ENCODE measurements at regions of chr18 and their contacts with region 1.

Region 1: DNA sequence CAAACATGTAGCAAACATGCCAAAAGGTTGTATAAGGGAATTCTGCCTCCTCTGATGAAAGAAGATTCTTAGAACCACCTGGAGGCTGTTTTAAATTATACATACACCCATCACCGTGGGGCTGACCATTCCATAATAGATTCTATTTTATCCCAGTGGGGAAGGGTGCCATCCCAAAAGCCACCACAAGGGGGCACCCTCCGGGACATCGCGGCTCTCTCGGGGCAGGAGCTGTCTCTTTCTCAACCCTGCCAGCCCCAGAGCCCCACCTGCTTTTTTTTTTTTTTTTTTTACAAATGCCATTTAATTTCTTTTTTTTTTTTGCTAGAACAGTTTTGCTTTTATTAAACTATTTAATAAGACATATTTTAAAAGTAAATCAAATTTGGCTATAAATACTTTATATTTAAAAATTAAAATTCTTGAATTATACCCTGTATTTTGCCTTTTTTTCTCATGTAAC is 8.6 kb upstream of the MTCL1 start:
- DNase-seq: peak; percentile 82
- H3K4me3 Mint-ChIP-seq: no peak overlapping the region
- H3K27ac Mint-ChIP-seq: no peak overlapping the region
- H3K4me1 Mint-ChIP-seq: no peaks in the 10 kb centered on the region
- H3K27me3 Mint-ChIP-seq: peaks cover 9% of the 10 kb centered on the region

Region 2: DNA sequence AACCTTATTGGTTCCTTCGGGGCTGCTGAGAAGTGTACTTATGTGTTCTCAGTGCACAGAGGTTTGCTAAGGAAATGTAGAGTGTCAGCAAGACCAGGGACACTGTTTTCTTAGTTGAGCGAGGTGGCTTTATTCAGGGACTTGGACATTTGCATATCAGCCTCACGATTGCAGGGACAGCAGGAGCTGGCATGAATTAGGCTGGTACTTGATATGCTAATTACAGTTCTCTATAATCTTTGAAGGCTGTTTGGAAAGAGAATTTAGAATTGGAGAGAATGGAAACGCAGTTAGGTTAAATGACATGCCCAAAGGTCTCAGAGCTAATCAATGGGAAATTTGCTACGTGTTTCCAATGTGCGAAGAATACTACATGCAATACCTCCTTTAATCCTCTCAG is 10.2 kb before region 1 on chr18:
- CTCF ChIA-PET with region 1: interaction called, 19 read pairs
- POLR2A ChIA-PET with region 1: no interaction called
- intact Hi-C with region 1: no loop called
- DNase-seq: no peak
- H3K4me3 Mint-ChIP-seq: no peak overlapping the region
- H3K27ac Mint-ChIP-seq: no peak overlapping the region
- H3K4me1 Mint-ChIP-seq: no peaks in the 10 kb centered on the region
- H3K27me3 Mint-ChIP-seq: peaks cover 6% of the 10 kb centered on the region

Region 3: DNA sequence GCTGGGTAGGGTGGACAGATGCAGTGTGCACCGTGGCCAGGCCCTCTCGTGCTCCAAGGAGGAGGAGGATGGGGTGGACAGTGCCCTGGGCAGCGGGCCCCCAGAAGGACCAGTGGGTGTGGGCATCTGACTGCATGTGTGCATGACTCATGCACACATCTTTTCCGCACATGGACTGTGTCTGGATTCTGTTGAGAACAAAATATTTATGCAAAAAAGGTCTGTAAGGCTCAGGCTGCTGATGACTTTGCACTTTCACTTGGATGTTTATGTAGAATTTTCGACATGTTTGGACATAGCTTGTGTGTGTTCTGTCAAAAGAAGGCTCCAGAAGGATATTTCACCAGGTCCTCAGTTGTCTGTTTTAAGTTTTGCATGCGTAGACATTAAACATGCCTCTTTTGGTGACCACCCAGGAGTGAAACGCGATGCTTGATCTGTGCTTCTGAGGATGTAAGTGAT is 54.2 kb after region 1 on chr18:
- CTCF ChIA-PET with region 1: no interaction called
- POLR2A ChIA-PET with region 1: no interaction called
- intact Hi-C with region 1: no loop called
- DNase-seq: no peak
- H3K4me3 Mint-ChIP-seq: no peak overlapping the region
- H3K27ac Mint-ChIP-seq: no peak overlapping the region
- H3K4me1 Mint-ChIP-seq: peaks cover 16% of the 10 kb centered on the region
- H3K27me3 Mint-ChIP-seq: no peaks in the 10 kb centered on the region

Region 4: GRCh38 chr18:8830067-8831060 is 133.6 kb after region 1 on chr18:
- CTCF ChIA-PET with region 1: no interaction called
- POLR2A ChIA-PET with region 1: no interaction called
- intact Hi-C with region 1: no loop called
- DNase-seq: no peak
- H3K4me3 Mint-ChIP-seq: no peak overlapping the region
- H3K27ac Mint-ChIP-seq: no peak overlapping the region
- H3K4me1 Mint-ChIP-seq: no peaks in the 10 kb centered on the region
- H3K27me3 Mint-ChIP-seq: no peaks in the 10 kb centered on the region

Region 5: GRCh38 chr18:8982416-8983184 is 285.8 kb after region 1 on chr18:
- CTCF ChIA-PET with region 1: interaction called, 65 read pairs
- POLR2A ChIA-PET with region 1: no interaction called
- intact Hi-C with region 1: no loop called
- DNase-seq: peak; percentile 24
- H3K4me3 Mint-ChIP-seq: no peak overlapping the region
- H3K27ac Mint-ChIP-seq: no peak overlapping the region
- H3K4me1 Mint-ChIP-seq: no peaks in the 10 kb centered on the region
- H3K27me3 Mint-ChIP-seq: no peaks in the 10 kb centered on the region

Region 6: GRCh38 chr18:8988261-8988871 is 291.6 kb after region 1 on chr18:
- CTCF ChIA-PET with region 1: interaction called, 65 read pairs
- POLR2A ChIA-PET with region 1: no interaction called
- intact Hi-C with region 1: loop called (anchors 1 kb)
- DNase-seq: peak; percentile 68
- H3K4me3 Mint-ChIP-seq: no peak overlapping the region
- H3K27ac Mint-ChIP-seq: no peak overlapping the region
- H3K4me1 Mint-ChIP-seq: no peaks in the 10 kb centered on the region
- H3K27me3 Mint-ChIP-seq: peaks cover 14% of the 10 kb centered on the region

Region 7: DNA sequence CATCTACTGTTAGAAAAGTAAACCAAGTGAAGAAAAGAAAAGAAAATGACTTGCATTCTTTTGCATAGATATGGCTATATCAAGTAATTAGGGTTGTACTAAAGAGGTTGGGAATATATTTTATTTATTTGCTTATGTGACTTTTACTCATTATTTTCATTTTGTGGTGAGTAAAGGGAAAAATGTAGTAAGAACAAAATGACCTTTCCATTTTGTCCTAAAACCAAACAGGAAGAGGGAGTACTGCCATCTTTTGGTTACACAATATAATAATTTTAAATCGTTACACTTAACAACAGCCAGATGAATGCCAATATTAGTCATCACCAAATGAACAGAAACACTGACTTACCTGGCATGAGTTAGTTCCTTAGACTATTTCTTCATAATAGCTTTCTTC is 358.4 kb after region 1 on chr18:
- CTCF ChIA-PET with region 1: no interaction called
- POLR2A ChIA-PET with region 1: no interaction called
- intact Hi-C with region 1: loop called (anchors 5 kb)
- DNase-seq: no peak
- H3K4me3 Mint-ChIP-seq: no peak overlapping the region
- H3K27ac Mint-ChIP-seq: no peak overlapping the region
- H3K4me1 Mint-ChIP-seq: peaks cover 8% of the 10 kb centered on the region
- H3K27me3 Mint-ChIP-seq: no peaks in the 10 kb centered on the region

Measured in activated CD4-positive, alpha-beta memory T cell treated with anti-CD3 and anti-CD28 coated beads for 36 hours (primary cell).